ENCODE measurements at regions of chr3 and their contacts with region 1.

Region 1: DNA sequence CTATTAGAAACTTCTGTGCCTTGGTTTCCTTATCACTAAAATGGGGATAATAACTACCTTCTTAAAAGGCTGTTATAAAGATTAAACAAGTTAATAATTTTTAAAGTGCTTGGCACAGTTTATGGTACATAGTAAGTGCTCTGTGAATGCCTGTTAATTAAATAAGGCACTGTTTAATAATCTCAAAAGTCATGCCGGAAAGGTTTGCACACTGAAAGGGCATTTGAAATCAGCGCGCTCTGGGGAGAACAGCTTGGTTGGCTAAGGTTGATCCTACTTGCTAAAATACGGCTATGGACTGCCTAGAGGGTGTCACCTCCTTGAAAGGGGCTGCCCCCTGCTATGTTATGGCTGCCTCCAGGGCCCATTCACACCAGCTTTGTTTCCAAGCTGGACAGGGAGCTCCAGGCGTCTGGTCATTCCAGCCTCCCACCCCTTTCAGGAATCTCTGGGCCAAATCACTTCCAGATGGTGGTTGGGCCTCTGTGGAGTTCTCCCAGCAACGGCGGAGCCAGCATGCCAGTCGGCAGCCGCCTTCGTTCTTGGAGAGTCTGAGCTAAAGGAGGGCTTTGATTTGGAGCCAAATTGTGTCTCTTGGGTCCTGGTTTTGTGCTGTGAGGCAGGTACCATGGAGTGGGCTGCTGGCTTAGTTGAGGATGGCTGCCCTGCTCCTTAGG is 5.9 kb downstream of the FLNB start:
- DNase-seq: no peak
- H3K4me3 ChIP-seq: peak overlapping the region in 3 of 4 donors; percentile 12 to 24 (median 20)
- H3K27ac ChIP-seq: peak overlapping the region; percentile 87 to 92 (median 88)
- H3K4me1 ChIP-seq: peaks cover 42 to 100% (median 96%) of the 10 kb centered on the region in 4 donors
- H3K27me3 ChIP-seq: no peaks in the 10 kb centered on the region
- CTCF ChIP-seq: no peak
- EP300 ChIP-seq: no peak
- POLR2A ChIP-seq: no peak

Region 2: DNA sequence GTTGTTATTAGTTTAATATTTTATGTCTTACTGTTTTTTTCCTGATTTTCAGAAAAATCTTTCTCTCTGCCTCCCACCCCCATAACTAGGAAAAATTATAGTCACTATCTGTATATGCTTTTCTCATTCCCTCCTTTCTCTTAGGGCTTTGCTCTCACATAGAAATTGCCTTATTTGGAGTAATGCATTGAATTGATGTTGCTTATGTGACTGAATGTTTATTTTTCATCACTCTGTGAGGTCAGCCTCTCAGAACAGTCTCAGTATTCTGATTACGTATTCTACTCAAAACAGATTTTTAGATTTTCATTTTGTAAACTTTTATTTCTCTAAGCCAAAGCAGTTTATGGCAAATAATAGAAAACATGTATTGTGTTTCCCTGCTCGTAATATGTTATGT is 137.0 kb before region 1 on chr3:
- intact Hi-C with region 1: no loop called
- DNase-seq: no peak
- H3K4me3 ChIP-seq: no peak overlapping the region
- H3K27ac ChIP-seq: peak overlapping the region in 3 of 4 donors; percentile 3 to 66 (median 44)
- H3K4me1 ChIP-seq: peaks cover 0 to 23% (median 13%) of the 10 kb centered on the region in 4 donors
- H3K27me3 ChIP-seq: no peaks in the 10 kb centered on the region
- CTCF ChIP-seq: no peak
- EP300 ChIP-seq: no peak
- POLR2A ChIP-seq: no peak

Region 3: DNA sequence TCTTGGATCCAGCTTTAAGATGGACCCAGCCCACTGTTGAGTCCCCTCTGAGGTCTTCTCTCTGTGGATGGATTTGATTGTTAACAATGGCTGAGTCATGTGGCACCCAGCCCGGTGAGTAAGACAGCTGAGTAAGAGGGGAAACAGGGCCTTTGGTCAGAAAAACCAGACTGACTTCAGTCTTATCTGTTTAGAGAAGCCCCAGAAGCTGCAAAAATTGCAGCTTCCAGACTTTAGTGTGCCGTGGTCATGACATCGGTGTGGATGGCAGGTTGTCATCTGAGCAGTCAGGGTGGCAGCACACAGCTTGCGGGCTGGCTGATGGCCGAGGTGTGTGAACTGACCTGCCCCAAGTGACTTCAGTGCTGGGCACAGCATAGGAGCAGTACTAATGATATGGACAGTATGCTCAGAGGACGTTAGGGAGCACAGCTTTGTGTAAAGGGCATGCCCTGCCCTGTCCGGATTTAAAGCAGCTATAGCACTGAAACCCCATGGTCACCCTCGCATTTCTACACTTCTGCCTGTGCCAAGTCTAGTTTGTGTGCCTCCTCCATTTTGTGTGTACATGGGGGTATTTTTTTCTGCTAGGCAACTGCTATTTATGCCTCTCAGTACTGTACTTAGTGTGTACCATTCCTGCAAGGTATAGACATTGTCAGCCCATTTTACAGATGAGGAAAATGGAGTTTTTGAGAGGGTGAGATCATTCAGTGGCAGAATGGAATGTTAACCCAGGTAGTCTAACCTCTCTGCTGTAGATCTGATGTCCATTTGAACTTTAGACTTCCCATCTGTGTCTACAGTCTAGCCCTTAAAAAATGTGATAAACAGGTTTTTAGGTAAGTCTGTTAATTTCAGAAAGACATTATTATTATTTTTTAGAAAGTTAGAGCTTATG is 38.5 kb after region 1 on chr3:
- intact Hi-C with region 1: no loop called
- DNase-seq: peak; percentile 97
- H3K4me3 ChIP-seq: no peak overlapping the region
- H3K27ac ChIP-seq: peak overlapping the region; percentile 76 to 86 (median 80)
- H3K4me1 ChIP-seq: peaks cover 59 to 86% (median 79%) of the 10 kb centered on the region in 4 donors
- H3K27me3 ChIP-seq: no peaks in the 10 kb centered on the region
- CTCF ChIP-seq: no peak
- EP300 ChIP-seq: no peak
- POLR2A ChIP-seq: no peak

Region 4: GRCh38 chr3:58066842-58067241 is 52.7 kb after region 1 on chr3:
- intact Hi-C with region 1: loop called (anchors 5 kb)
- DNase-seq: no peak
- H3K4me3 ChIP-seq: no peak overlapping the region
- H3K27ac ChIP-seq: peak overlapping the region; percentile 79 to 86 (median 83)
- H3K4me1 ChIP-seq: peaks cover 18 to 98% (median 97%) of the 10 kb centered on the region in 4 donors
- H3K27me3 ChIP-seq: no peaks in the 10 kb centered on the region
- CTCF ChIP-seq: no peak
- EP300 ChIP-seq: no peak
- POLR2A ChIP-seq: no peak

Region 5: GRCh38 chr3:58079773-58080172 is 65.7 kb after region 1 on chr3:
- intact Hi-C with region 1: no loop called
- DNase-seq: no peak
- H3K4me3 ChIP-seq: no peak overlapping the region
- H3K27ac ChIP-seq: peak overlapping the region in 2 of 4 donors; percentile 26 to 40
- H3K4me1 ChIP-seq: peaks cover 7 to 52% (median 46%) of the 10 kb centered on the region in 4 donors
- H3K27me3 ChIP-seq: no peaks in the 10 kb centered on the region
- CTCF ChIP-seq: no peak
- EP300 ChIP-seq: no peak
- POLR2A ChIP-seq: no peak

Region 6: GRCh38 chr3:58135712-58136543 is 121.8 kb after region 1 on chr3:
- intact Hi-C with region 1: no loop called
- DNase-seq: no peak
- H3K4me3 ChIP-seq: no peak overlapping the region
- H3K27ac ChIP-seq: peak overlapping the region; percentile 40 to 74 (median 62)
- H3K4me1 ChIP-seq: peaks cover 4 to 23% (median 9%) of the 10 kb centered on the region in 4 donors
- H3K27me3 ChIP-seq: no peaks in the 10 kb centered on the region
- CTCF ChIP-seq: peak; percentile 17 to 45 (median 27)
- EP300 ChIP-seq: no peak
- POLR2A ChIP-seq: no peak

Region 7: GRCh38 chr3:58161435-58162398 is 147.6 kb after region 1 on chr3:
- intact Hi-C with region 1: loop called (anchors 5 kb)
- DNase-seq: peak; percentile 96
- H3K4me3 ChIP-seq: no peak overlapping the region
- H3K27ac ChIP-seq: peak overlapping the region; percentile 69 to 82 (median 80)
- H3K4me1 ChIP-seq: peaks cover 35 to 88% (median 61%) of the 10 kb centered on the region in 4 donors
- H3K27me3 ChIP-seq: no peaks in the 10 kb centered on the region
- CTCF ChIP-seq: no peak
- EP300 ChIP-seq: no peak
- POLR2A ChIP-seq: no peak

Measured in esophagus muscularis mucosa (tissue), 4 donors.